Activated T-helper 1 cell treated with anti-CD3 and anti-CD28 coated beads, Interleukin-12 subunit alpha, Interleukin-12 subunit beta, Interleukin-2, Interleukin-4 antibody, amounts not matched to agents 30 ng/mL and 10 ng/mL and 1 ng/mL, durations not matched to agents 14 hours and 24 hours and 36 hours (primary cell): ENCODE measurements at regions of chr5 and their contacts with region 1.

Region 1: DNA sequence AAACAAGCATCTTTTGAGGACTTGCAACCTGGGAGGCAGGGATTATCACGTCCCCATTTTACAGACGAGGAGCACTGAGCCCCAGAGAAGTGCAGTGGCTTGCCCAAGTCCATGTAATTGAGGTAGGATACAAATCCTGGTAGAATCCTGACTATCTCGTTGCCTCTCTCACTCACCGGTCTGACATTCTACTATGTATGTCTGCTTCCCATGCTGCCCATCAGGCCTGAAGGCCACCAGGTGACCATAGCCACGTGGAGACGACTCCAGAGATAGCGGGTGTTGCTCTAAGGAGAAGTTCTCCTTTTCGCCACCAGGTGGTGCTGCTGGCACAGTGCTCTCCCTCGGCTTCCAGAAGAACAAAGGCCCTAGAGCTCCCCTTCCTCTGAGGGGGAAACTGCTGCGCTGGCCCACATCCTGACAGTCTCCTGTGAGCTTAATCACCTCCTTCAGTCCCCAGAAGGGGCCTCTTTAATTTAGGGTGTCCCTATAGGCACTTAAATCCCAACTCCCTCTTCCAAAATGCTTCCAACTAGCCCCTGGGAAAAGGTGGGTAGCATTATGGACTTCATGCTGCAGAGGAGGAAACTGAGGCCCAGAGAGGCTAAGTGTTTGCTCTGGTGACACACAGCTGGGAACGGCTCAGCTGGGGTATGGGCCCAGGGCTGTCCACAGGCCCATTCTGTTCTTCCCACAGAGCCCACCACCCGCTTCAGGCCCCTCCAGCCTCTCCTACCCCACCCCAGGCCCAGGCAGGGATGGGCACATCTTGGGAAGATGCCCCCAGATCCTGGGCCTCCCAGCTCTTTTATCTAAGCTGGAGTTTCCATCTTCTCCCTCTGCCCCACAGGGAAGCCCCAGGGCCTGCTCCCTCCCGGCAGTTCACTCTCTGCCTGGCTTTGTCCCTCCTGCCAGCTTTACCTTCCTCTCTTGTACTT is 6.4 kb downstream of the SLC34A1 start:
- DNase-seq: peak; percentile 80
- H3K4me3 Mint-ChIP-seq: peak overlapping the region; percentile 5
- H3K27ac Mint-ChIP-seq: peak overlapping the region; percentile 65
- H3K4me1 Mint-ChIP-seq: peaks cover 34% of the 10 kb centered on the region
- H3K27me3 Mint-ChIP-seq: peaks cover 3% of the 10 kb centered on the region

Region 2: GRCh38 chr5:177317959-177318377 is 72.7 kb before region 1 on chr5:
- intact Hi-C with region 1: loop called (anchors 1 kb)
- DNase-seq: peak; percentile 61
- H3K4me3 Mint-ChIP-seq: no peak overlapping the region
- H3K27ac Mint-ChIP-seq: no peak overlapping the region
- H3K4me1 Mint-ChIP-seq: peaks cover 22% of the 10 kb centered on the region
- H3K27me3 Mint-ChIP-seq: no peaks in the 10 kb centered on the region

Region 3: DNA sequence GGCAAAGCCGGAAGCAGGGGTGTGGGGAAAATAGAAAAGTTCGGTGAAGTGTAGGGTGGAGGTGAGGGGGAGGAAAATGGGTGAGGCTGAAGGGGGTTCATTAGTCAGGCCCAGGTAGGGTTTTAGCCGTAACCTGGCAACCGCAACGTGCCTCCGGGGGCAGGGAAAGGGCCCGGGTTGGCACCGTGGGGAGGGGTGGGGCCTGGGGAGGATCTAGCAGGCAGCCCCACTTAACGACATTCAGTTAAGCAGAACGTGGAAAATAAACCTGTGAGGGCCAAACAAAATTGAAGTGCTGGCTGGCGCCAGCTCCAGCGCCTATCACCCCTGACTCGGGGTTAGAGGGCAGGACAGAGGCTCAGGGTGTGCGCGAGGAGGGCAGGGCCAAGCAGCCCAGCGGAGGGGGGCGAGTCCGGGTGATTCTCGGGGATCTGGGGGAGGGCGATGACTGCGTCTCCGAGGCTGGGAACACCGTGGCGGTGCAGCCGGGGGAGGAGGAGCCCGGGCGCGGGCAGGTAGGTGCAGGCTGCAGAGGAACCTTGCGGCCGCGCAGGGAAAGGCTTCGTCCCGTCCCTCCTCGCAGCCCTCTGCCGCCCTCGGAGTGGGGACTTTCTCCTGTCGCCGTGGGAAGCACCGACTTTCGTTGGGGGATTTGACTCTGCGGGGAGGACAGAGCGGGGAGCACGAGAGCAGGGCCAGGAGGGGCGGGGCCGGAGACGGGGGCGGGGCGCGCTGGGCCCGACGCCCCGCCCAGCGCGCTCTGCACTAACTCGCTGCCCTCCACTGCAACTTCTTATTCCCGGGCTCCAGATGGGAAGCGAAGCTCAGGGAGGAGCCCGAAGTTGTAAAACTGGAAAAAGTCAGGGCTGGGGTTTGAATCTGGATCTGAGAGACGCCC is 27.8 kb before region 1 on chr5:
- intact Hi-C with region 1: loop called (anchors 1 kb)
- DNase-seq: peak; percentile 56
- H3K4me3 Mint-ChIP-seq: peak overlapping the region; percentile 67
- H3K27ac Mint-ChIP-seq: peak overlapping the region; percentile 56
- H3K4me1 Mint-ChIP-seq: peaks cover 65% of the 10 kb centered on the region
- H3K27me3 Mint-ChIP-seq: peaks cover 2% of the 10 kb centered on the region

Region 4: GRCh38 chr5:177403792-177404640 is 13.4 kb after region 1 on chr5:
- intact Hi-C with region 1: loop called (anchors 1 kb)
- DNase-seq: peak; percentile 75
- H3K4me3 Mint-ChIP-seq: peak overlapping the region; percentile 84
- H3K27ac Mint-ChIP-seq: no peak overlapping the region
- H3K4me1 Mint-ChIP-seq: peaks cover 17% of the 10 kb centered on the region
- H3K27me3 Mint-ChIP-seq: peaks cover 34% of the 10 kb centered on the region

Region 5: GRCh38 chr5:177446200-177447065 is 55.8 kb after region 1 on chr5 and contains the start of gene PRR7:
- intact Hi-C with region 1: loop called (anchors 1 kb)
- DNase-seq: peak; percentile 62
- H3K4me3 Mint-ChIP-seq: peak within 1 kb of the TSS; percentile 77
- H3K27ac Mint-ChIP-seq: peak within 1 kb of the TSS; percentile 90
- H3K4me1 Mint-ChIP-seq: peaks cover 30% of the 10 kb centered on the region
- H3K27me3 Mint-ChIP-seq: peaks cover 9% of the 10 kb centered on the region
- total RNA-seq, gene PRR7: 10.3 and 11.2 TPM in 2 replicates